T-cell (primary cell): ENCODE measurements at regions of chr7 and their contacts with region 1.

Region 1: GRCh38 chr7:139660317-139661042 is 117.3 kb downstream of the HIPK2 start:
- DNase-seq: no peak
- ATAC-seq: no peak
- H3K4me3 ChIP-seq: no peak overlapping the region
- H3K4me3 Mint-ChIP-seq: no peak overlapping the region
- H3K27ac ChIP-seq: no peak overlapping the region
- H3K27ac Mint-ChIP-seq: no peak overlapping the region
- H3K4me1 ChIP-seq: peaks cover 0 to 6% of the 10 kb centered on the region in 2 experiments
- H3K4me1 Mint-ChIP-seq: peaks cover 47 to 74% (median 58%) of the 10 kb centered on the region in 3 donors
- H3K27me3 ChIP-seq: no peaks in the 10 kb centered on the region
- H3K27me3 Mint-ChIP-seq: no peaks in the 10 kb centered on the region

Region 2: GRCh38 chr7:139515266-139515665 is 145.2 kb before region 1 on chr7:
- CTCF ChIA-PET with region 1: no interaction called
- POLR2A ChIA-PET with region 1: no interaction called
- DNase-seq: no peak
- ATAC-seq: no peak
- H3K4me3 ChIP-seq: no peak overlapping the region
- H3K4me3 Mint-ChIP-seq: no peak overlapping the region
- H3K27ac ChIP-seq: no peak overlapping the region
- H3K27ac Mint-ChIP-seq: no peak overlapping the region
- H3K4me1 ChIP-seq: no peaks in the 10 kb centered on the region
- H3K4me1 Mint-ChIP-seq: no peaks in the 10 kb centered on the region
- H3K27me3 ChIP-seq: peaks cover 0 to 5% of the 10 kb centered on the region in 2 experiments
- H3K27me3 Mint-ChIP-seq: peaks cover 3 to 7% of the 10 kb centered on the region in 2 donors

Region 3: DNA sequence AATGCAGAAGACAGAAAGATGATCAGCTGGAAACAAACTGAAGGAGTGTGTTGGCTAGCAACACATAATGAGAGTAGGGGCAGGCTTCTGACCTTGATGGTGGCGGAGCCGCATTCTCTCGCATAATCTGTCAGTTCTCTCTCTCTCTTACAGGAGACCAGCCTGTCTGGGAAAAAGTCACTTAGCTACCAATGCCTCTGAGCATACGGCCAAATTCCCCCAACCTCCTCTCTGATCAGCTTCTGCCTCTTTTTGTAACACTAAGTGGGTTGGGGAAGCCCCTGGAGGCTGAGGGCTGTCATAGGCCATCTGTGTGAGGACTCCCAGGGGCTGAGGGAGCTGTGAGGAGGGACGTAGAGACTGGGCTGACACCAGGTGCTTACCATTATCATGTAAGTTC is 12.8 kb after region 1 on chr7:
- CTCF ChIA-PET with region 1: no interaction called
- POLR2A ChIA-PET with region 1: interaction called in 1 of 2 experiments, 12 read pairs
- DNase-seq: no peak
- ATAC-seq: peak in 2 of 4 experiments; percentile 6 to 33
- H3K4me3 ChIP-seq: no peak overlapping the region
- H3K4me3 Mint-ChIP-seq: no peak overlapping the region
- H3K27ac ChIP-seq: no peak overlapping the region
- H3K27ac Mint-ChIP-seq: peak overlapping the region in 1 of 2 donors; percentile 72
- H3K4me1 ChIP-seq: peaks cover 0 to 6% of the 10 kb centered on the region in 2 experiments
- H3K4me1 Mint-ChIP-seq: peaks cover 19 to 50% (median 27%) of the 10 kb centered on the region in 3 donors
- H3K27me3 ChIP-seq: no peaks in the 10 kb centered on the region
- H3K27me3 Mint-ChIP-seq: no peaks in the 10 kb centered on the region

Region 4: DNA sequence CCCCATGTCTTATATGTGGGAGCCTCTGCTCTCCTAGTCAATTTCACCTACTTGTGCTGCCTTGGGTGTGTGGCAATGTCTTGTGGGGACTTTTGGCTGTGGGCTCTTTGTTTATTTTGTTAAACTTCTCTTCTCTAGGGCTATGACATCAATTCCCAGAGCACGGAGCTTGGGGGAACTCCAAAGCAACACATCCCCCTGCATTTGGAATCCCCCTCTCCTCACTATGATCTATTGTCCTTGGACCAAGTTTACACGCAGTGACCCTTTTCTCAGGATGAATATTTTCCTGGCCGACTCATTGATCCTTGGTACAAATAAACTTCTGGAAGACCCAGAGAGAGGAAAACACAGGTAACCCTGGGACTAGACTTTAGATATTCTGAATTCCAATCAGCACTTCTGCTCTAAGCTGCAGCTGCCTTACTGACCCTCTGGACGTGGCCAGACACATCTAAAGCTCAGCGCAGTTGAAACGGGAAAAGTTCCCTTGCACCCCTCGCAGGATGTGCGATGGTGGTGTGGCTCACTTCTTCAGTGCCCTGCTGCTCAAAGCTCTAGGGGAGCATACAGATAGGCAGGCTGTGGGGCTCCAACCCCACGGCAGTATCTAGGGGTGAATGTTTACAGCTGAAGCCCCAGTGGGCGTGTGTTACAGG is 1524.2 kb after region 1 on chr7:
- CTCF ChIA-PET with region 1: no interaction called
- POLR2A ChIA-PET with region 1: no interaction called
- DNase-seq: no peak
- ATAC-seq: no peak
- H3K4me3 ChIP-seq: no peak overlapping the region
- H3K4me3 Mint-ChIP-seq: no peak overlapping the region
- H3K27ac ChIP-seq: no peak overlapping the region
- H3K27ac Mint-ChIP-seq: no peak overlapping the region
- H3K4me1 ChIP-seq: no peaks in the 10 kb centered on the region
- H3K4me1 Mint-ChIP-seq: no peaks in the 10 kb centered on the region
- H3K27me3 ChIP-seq: no peaks in the 10 kb centered on the region
- H3K27me3 Mint-ChIP-seq: peaks cover 5 to 6% of the 10 kb centered on the region in 2 donors